Tibial artery (tissue), 4 donors: ENCODE measurements at regions of chr9 and their contacts with region 1.

Region 1: GRCh38 chr9:128361986-128362646 is 9.1 kb upstream of the URM1 start:
- DNase-seq: peak; percentile 89 to 91
- H3K4me3 ChIP-seq: peak overlapping the region; percentile 42 to 61
- H3K27ac ChIP-seq: peak overlapping the region; percentile 59 to 64
- H3K4me1 ChIP-seq: peaks cover 0 to 26% (median 18%) of the 10 kb centered on the region in 4 donors
- H3K27me3 ChIP-seq: peaks cover 0 to 5% of the 10 kb centered on the region in 2 donors
- CTCF ChIP-seq: peak; percentile 82 to 83

Region 2: GRCh38 chr9:128438343-128439109 is 76.4 kb after region 1 on chr9:
- intact Hi-C with region 1: loop called (anchors 2 kb)
- DNase-seq: peak; percentile 81 to 88
- H3K4me3 ChIP-seq: no peak overlapping the region
- H3K27ac ChIP-seq: no peak overlapping the region
- H3K4me1 ChIP-seq: peaks cover 0 to 7% (median 3%) of the 10 kb centered on the region in 4 donors
- H3K27me3 ChIP-seq: no peaks in the 10 kb centered on the region
- CTCF ChIP-seq: peak; percentile 90 to 94